ENCODE measurements at regions of chr15 and their contacts with region 1.

Region 1: DNA sequence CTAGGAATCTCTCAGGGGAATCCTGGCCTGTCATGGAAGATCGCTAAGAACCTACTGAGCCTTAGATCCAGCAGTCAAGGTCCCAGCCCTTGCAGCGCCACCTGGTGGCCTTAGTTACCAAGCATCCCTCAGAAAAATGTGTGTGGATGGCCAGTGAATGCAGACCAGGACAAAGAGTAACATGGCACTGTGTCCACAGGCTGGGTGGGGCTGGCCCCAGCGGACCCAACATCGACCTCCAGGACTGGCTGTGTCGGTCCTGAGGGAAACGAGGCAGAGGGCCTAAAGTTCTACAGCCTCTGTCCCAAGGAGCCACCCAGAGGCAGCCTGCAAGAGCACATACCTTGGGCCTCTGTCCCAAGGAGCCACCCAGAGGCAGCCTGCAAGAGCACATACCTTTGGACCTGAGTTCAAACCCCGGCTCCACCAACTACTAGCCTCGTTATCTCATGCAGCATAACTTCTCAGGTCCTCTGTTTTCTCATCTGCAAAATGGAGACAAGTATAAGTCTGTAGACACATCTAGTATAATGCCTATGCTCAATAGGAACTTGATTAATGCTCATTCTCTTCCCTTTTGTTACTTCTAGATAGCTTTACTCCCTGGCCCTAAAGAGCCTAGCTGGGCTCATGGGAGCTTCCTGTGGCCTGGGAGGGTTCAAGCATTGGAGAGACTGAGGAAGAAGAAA is 57.5 kb upstream of the HERC1 start:
- DNase-seq: peak; percentile 83
- ATAC-seq: peak; percentile 29
- H3K4me3 Mint-ChIP-seq: no peak overlapping the region
- H3K27ac Mint-ChIP-seq: peak overlapping the region; percentile 87
- H3K4me1 Mint-ChIP-seq: peaks cover 61% of the 10 kb centered on the region
- H3K27me3 Mint-ChIP-seq: no peaks in the 10 kb centered on the region

Region 2: GRCh38 chr15:63473999-63474809 is 417.0 kb before region 1 on chr15:
- CTCF ChIA-PET with region 1: no interaction called
- DNase-seq: no peak
- ATAC-seq: no peak
- H3K4me3 Mint-ChIP-seq: no peak overlapping the region
- H3K27ac Mint-ChIP-seq: no peak overlapping the region
- H3K4me1 Mint-ChIP-seq: peaks cover 29% of the 10 kb centered on the region
- H3K27me3 Mint-ChIP-seq: no peaks in the 10 kb centered on the region

Region 3: DNA sequence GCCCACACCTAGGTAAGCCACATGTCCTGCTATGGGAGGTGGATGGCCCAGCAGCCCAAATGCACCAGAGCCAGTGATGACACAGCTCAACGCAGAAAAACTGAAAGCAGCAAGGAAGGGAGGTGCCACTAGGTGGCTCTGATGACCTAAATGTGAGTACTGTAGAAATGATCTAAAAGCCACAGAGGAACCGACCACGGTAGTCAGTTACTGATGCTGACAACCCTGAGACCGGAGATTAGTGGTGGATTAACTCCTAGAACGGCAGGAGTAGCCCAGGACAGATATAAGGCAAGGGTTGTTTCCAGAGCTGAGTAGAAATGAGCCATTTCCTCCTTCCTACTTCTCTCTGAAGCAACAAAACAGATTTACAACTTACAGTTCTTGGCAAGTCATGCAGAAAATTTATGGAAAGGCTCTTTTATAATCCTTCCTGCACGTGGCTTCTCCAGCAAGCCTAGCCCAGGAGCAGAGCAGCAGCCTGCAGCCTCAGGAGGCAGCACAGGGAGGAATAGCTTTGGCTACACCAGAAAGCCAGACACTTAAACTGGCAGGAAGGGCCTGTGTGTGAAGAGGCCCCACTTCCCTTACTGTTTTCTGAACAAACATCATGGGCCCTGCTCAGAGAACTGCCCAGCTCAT is 280.9 kb before region 1 on chr15:
- CTCF ChIA-PET with region 1: interaction called, 31 read pairs
- DNase-seq: peak; percentile 92
- ATAC-seq: peak; percentile 89
- H3K4me3 Mint-ChIP-seq: peak overlapping the region; percentile 8
- H3K27ac Mint-ChIP-seq: peak overlapping the region; percentile 94
- H3K4me1 Mint-ChIP-seq: peaks cover 39% of the 10 kb centered on the region
- H3K27me3 Mint-ChIP-seq: no peaks in the 10 kb centered on the region

Region 4: GRCh38 chr15:63718590-63719035 is 172.6 kb before region 1 on chr15:
- CTCF ChIA-PET with region 1: no interaction called
- DNase-seq: no peak
- ATAC-seq: no peak
- H3K4me3 Mint-ChIP-seq: no peak overlapping the region
- H3K27ac Mint-ChIP-seq: no peak overlapping the region
- H3K4me1 Mint-ChIP-seq: peaks cover 20% of the 10 kb centered on the region
- H3K27me3 Mint-ChIP-seq: no peaks in the 10 kb centered on the region

Region 5: GRCh38 chr15:63833021-63833696 is 58.1 kb before region 1 on chr15:
- CTCF ChIA-PET with region 1: interaction called, 11 read pairs
- DNase-seq: peak; percentile 61
- ATAC-seq: peak; percentile 69
- H3K4me3 Mint-ChIP-seq: peak overlapping the region; percentile 97
- H3K27ac Mint-ChIP-seq: peak overlapping the region; percentile 97
- H3K4me1 Mint-ChIP-seq: peaks cover 44% of the 10 kb centered on the region
- H3K27me3 Mint-ChIP-seq: peaks cover 6% of the 10 kb centered on the region

Region 6: DNA sequence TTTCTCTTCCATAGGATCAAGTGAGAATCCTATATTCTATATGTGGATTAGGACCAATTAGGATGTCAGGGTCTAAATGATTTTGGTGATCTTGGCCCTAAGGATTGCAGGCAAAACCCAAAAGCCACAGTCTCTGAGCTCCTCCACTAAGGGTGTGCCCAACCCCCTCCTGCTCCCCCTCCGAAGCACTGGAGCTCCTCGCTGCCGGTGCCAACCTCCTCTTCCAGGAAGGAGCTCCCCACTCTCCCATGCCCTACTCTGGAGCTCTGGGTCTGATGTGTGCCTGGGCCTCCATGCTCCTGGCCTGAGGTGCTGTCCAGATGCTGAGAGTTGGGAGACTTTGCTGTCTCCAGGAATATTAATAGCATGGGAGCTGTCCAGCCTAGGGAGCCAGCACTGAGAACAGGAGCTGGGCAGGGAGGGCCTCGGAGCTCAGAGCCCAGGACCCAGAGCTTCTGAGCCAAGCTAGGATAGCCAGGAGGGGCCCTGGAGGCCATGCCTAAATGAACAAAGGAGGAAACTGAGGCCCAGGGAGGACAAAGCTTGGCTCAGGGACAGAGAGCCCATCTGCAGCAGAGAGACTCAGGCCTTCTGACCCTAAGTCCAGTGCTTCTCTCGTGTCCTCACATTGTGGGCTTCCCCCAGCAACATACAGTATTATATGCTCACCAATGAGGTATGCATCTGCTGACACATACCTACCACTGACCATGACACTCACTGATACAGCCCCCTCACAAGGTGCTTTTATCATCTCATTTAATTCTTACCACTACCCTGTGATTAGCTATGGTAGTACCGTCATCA is 20.6 kb before region 1 on chr15:
- CTCF ChIA-PET with region 1: no interaction called
- DNase-seq: no peak
- ATAC-seq: no peak
- H3K4me3 Mint-ChIP-seq: no peak overlapping the region
- H3K27ac Mint-ChIP-seq: no peak overlapping the region
- H3K4me1 Mint-ChIP-seq: peaks cover 6% of the 10 kb centered on the region
- H3K27me3 Mint-ChIP-seq: no peaks in the 10 kb centered on the region

Region 7: GRCh38 chr15:63905558-63906265 is 14.5 kb after region 1 on chr15:
- CTCF ChIA-PET with region 1: interaction called, 11 read pairs
- DNase-seq: no peak
- ATAC-seq: peak; percentile 85
- H3K4me3 Mint-ChIP-seq: no peak overlapping the region
- H3K27ac Mint-ChIP-seq: peak overlapping the region; percentile 87
- H3K4me1 Mint-ChIP-seq: peaks cover 19% of the 10 kb centered on the region
- H3K27me3 Mint-ChIP-seq: no peaks in the 10 kb centered on the region

Region 8: DNA sequence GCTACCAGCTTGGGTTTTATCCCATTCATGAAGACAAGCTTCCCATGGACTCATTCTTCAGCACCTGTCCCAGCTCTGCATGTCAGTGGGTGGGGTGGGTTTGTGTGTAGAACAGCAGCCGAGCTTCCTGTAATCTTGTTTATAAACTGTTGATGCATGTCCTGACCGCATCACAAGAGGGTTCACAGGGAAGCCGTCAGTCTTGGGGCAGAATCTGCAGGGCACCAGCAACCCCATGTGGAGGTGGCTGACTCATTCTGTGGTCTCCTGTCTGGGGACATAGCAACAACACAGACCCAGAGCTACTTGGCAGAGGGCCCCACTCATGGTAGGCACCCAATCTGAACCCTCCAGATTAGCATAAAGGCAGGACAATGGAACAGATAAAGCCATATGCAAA is 119.5 kb after region 1 on chr15:
- CTCF ChIA-PET with region 1: interaction called, 23 read pairs
- DNase-seq: peak; percentile 96
- ATAC-seq: peak; percentile 94
- H3K4me3 Mint-ChIP-seq: peak overlapping the region; percentile 57
- H3K27ac Mint-ChIP-seq: peak overlapping the region; percentile 91
- H3K4me1 Mint-ChIP-seq: peaks cover 66% of the 10 kb centered on the region
- H3K27me3 Mint-ChIP-seq: no peaks in the 10 kb centered on the region

Measured in activated CD8-positive, alpha-beta memory T cell treated with anti-CD3 and anti-CD28 coated beads, Interleukin-2, amount 10 ng/mL, durations not matched to agents 7 days and 5 days (primary cell).